Activated CD4-positive, alpha-beta memory T cell treated with anti-CD3 and anti-CD28 coated beads for 36 hours (primary cell): ENCODE measurements at regions of chr4 and their contacts with region 1.

Region 1: GRCh38 chr4:82739316-82740179 is 59.0 kb downstream of the SCD5 start:
- DNase-seq: peak; percentile 87
- H3K4me3 Mint-ChIP-seq: no peak overlapping the region
- H3K27ac Mint-ChIP-seq: no peak overlapping the region
- H3K4me1 Mint-ChIP-seq: no peaks in the 10 kb centered on the region
- H3K27me3 Mint-ChIP-seq: peaks cover 5% of the 10 kb centered on the region

Region 2: DNA sequence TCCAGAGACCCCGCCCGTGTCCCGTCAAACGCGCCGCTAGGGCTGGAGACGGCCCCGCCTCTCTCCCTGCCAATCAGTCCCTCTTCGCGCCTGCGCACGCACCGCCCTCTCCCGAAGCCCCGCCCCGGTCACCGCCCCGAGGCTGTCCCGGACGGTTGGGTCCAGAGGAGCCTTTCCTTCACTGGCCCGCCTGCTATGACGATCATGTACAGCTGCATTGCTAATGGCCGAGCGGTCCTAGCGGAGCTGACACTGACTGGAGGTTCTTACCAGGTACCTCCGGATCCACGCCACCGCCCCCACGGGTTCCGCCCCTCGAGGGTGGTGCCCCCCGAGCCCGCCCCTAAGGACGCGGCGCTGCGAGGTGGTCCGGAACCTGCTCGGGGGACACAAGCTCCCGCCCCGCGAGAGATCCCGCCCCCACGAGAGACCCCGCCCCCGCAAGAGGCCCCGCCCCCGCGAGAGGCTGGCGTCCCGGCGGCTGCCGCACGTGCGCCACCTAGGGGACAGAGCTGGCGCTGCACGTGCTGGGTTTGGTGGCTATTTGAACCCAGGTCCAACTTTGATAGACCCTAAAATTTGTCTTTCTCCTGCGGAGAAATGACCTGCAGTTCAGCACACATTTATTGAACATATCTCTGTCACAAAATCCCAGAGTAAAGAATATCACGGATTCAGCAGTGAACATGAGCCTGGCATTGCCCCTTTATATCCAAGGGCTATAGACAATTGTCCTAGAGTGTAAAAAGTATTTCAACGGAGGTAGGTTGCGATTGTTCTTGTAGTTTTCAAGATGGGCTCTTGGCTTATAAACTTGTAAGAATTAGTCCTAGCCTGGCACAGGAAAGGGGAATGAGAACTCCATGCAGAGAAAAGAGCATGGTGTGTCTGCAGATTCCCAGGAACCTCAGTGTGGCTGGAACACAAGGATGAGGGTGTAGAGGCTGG is 454.4 kb before region 1 on chr4:
- CTCF ChIA-PET with region 1: no interaction called
- POLR2A ChIA-PET with region 1: no interaction called
- intact Hi-C with region 1: loop called (anchors 10 kb)
- DNase-seq: peak; percentile 100
- H3K4me3 Mint-ChIP-seq: peak overlapping the region; percentile 61
- H3K27ac Mint-ChIP-seq: peak overlapping the region; percentile 38
- H3K4me1 Mint-ChIP-seq: peaks cover 12% of the 10 kb centered on the region
- H3K27me3 Mint-ChIP-seq: peaks cover 3% of the 10 kb centered on the region

Region 3: DNA sequence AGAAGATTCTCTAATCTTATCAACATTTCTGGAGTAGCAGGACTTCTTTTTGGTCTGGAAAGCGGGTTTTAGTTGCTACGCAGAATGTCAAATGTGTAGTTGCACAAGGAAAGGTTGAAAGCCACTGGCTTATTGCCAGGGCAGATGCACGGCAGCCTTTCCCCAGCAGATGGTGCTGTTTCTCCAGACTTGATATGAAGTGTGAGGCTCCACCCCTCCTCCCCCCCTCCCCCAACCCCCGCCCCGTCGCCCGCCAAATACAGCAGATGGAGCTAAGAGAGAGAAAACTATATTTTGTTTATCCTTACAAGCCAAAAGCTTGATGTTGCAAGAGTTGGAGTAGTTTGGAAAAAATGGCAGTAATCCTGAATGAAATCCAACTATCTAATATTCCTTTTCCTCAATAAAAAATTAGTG is 277.1 kb before region 1 on chr4:
- CTCF ChIA-PET with region 1: interaction called, 31 read pairs
- POLR2A ChIA-PET with region 1: no interaction called
- intact Hi-C with region 1: loop called (anchors 1 kb)
- DNase-seq: peak; percentile 88
- H3K4me3 Mint-ChIP-seq: no peak overlapping the region
- H3K27ac Mint-ChIP-seq: no peak overlapping the region
- H3K4me1 Mint-ChIP-seq: peaks cover 2% of the 10 kb centered on the region
- H3K27me3 Mint-ChIP-seq: no peaks in the 10 kb centered on the region

Region 4: DNA sequence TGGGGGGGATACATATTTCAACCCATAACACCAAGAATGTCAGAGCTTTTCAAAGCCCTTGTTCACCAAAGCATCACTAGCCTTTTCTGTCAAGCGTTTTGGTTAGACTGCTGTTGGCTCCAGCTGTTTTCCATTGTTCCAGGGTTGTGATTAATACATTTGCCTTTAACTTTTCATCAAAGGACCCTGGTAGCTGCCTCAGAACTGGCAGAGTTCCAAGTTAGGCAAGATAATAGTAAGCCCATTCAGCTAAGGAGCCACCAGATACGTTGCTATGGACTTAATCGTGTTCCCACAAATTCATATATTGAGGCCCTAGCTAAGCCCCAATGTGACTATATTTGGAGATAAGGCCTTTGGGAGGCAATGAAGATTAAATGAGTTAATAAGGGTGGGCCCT is 272.1 kb before region 1 on chr4:
- CTCF ChIA-PET with region 1: interaction called, 31 read pairs
- POLR2A ChIA-PET with region 1: no interaction called
- intact Hi-C with region 1: loop called (anchors 1 kb)
- DNase-seq: no peak
- H3K4me3 Mint-ChIP-seq: no peak overlapping the region
- H3K27ac Mint-ChIP-seq: no peak overlapping the region
- H3K4me1 Mint-ChIP-seq: no peaks in the 10 kb centered on the region
- H3K27me3 Mint-ChIP-seq: no peaks in the 10 kb centered on the region

Region 5: DNA sequence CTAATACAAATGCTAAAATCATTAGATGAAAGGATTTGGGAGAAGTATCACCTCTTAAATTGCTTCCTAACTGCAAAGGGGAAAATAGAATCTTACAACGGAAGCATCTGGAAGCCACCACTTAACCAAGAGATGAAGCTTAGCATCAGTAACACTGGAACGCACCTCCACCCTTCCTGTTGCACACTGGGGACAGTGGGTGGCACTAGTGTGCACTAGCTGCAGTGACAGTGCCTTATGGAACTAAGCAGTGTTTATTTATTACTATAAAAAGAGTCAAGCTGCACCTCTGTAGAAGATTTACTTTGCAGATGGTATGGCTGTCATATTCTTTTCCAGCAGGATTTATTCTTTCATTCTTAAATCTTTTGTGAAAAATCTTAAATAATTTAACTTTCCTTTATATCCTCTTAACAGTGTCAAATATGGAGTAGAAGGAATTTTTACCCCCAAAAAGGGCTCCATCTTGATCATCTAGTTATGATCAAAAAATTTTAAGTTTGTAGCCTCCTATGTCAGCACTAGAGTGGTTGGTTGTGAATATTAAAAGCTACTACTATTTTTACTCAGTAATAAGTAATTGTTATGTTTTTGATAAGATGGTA is 17.6 kb before region 1 on chr4:
- CTCF ChIA-PET with region 1: interaction called, 15 read pairs
- POLR2A ChIA-PET with region 1: no interaction called
- intact Hi-C with region 1: no loop called
- DNase-seq: peak; percentile 16
- H3K4me3 Mint-ChIP-seq: no peak overlapping the region
- H3K27ac Mint-ChIP-seq: no peak overlapping the region
- H3K4me1 Mint-ChIP-seq: no peaks in the 10 kb centered on the region
- H3K27me3 Mint-ChIP-seq: no peaks in the 10 kb centered on the region

Region 6: DNA sequence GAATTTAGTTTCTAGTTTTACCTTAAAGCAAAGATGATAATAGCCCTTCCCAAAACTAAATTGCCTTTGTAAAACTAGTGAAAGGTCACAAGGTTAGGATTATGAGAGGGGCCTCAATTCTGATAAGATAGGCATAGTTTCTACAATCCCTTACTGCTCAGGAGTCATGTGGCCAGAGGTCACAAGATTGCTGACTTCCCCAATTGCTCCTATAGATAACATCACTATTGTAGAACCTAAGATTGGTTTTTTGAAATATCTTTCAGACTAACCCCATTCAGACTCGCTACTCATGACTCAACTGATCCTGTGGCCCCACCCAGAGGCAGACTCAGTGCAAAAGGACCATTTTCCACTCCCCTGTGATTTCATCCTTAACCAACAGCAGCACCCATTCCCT is 11.2 kb before region 1 on chr4:
- CTCF ChIA-PET with region 1: interaction called, 15 read pairs
- POLR2A ChIA-PET with region 1: no interaction called
- intact Hi-C with region 1: no loop called
- DNase-seq: no peak
- H3K4me3 Mint-ChIP-seq: no peak overlapping the region
- H3K27ac Mint-ChIP-seq: no peak overlapping the region
- H3K4me1 Mint-ChIP-seq: no peaks in the 10 kb centered on the region
- H3K27me3 Mint-ChIP-seq: peaks cover 1% of the 10 kb centered on the region